ENCODE measurements at regions of chr19 and their contacts with region 1.

Region 1: GRCh38 chr19:13366529-13367143 is 139.6 kb downstream of the CACNA1A start:
- DNase-seq: peak in 1 of 2 experiments; percentile 14
- H3K4me3 ChIP-seq: no peak overlapping the region
- H3K4me3 Mint-ChIP-seq: no peak overlapping the region
- H3K27ac Mint-ChIP-seq: no peak overlapping the region
- H3K4me1 ChIP-seq: no peaks in the 10 kb centered on the region
- H3K4me1 Mint-ChIP-seq: no peaks in the 10 kb centered on the region
- H3K27me3 ChIP-seq: no peaks in the 10 kb centered on the region
- H3K27me3 Mint-ChIP-seq: peaks cover 8% of the 10 kb centered on the region
- CTCF ChIP-seq: peak; percentile 34 to 42

Region 2: GRCh38 chr19:13255041-13255718 is 111.5 kb before region 1 on chr19:
- CTCF ChIA-PET with region 1: no interaction called
- POLR2A ChIA-PET with region 1: no interaction called
- intact Hi-C with region 1: no loop called
- DNase-seq: no peak
- H3K4me3 ChIP-seq: no peak overlapping the region
- H3K4me3 Mint-ChIP-seq: no peak overlapping the region
- H3K27ac Mint-ChIP-seq: no peak overlapping the region
- H3K4me1 ChIP-seq: no peaks in the 10 kb centered on the region
- H3K4me1 Mint-ChIP-seq: no peaks in the 10 kb centered on the region
- H3K27me3 ChIP-seq: no peaks in the 10 kb centered on the region; the same call in none of the 2 replicates
- H3K27me3 Mint-ChIP-seq: peaks cover 14% of the 10 kb centered on the region
- CTCF ChIP-seq: no peak

Region 3: GRCh38 chr19:13430790-13431582 is 64.3 kb after region 1 on chr19:
- CTCF ChIA-PET with region 1: no interaction called
- POLR2A ChIA-PET with region 1: no interaction called
- intact Hi-C with region 1: loop called (anchors 10 kb)
- DNase-seq: peak; percentile 38 to 47
- H3K4me3 ChIP-seq: no peak overlapping the region
- H3K4me3 Mint-ChIP-seq: no peak overlapping the region
- H3K27ac Mint-ChIP-seq: no peak overlapping the region
- H3K4me1 ChIP-seq: no peaks in the 10 kb centered on the region
- H3K4me1 Mint-ChIP-seq: no peaks in the 10 kb centered on the region
- H3K27me3 ChIP-seq: no peaks in the 10 kb centered on the region
- H3K27me3 Mint-ChIP-seq: no peaks in the 10 kb centered on the region
- CTCF ChIP-seq: peak; percentile 52 to 69